ENCODE measurements at regions of chr3 and their contacts with region 1.

Region 1: DNA sequence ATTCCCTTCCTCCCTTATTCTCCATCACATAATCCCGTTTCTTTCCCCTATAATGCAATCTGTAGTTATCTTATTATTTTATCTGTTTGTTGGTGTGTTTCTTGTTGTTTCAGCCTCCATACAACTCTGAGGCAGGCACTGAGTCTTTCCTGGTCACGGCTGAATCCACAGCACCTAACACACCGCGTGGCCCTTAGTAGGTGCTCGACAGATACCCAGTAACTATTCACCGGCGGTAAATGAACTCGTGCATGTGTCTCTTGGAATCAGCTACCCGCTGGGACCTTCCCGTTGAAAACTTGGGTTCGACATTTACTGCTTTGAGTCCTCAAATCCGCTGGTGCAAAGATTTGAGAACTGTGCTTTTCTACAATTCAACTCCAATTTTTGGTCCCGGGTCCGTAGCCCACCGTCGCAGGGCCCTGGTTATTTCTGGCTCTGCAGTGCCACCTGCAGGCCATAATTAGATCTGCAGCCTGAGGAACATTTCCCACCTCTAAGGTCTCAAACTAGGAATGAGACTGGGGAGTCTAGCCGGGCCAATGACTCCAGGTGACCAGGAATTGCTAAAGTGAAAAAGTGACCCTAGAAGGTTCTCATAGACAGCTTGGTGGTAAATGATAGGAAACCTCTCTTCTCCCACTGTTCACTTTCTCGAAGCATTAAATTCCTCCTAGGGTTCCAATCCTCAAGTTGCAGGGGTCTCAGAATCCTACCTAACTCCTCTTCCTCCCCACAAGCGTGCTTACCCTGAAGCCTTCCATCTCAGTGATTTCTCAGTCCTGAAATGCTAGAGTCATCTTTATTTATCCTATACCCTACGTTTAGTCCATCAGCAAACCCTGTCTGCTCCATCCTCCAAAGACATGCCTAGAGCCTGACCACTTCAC is 40.0 kb upstream of the TRH start:
- DNase-seq: peak in 5 of 10 donors; percentile 28 to 64 (median 39)
- H3K4me3 ChIP-seq: peak overlapping the region in 47 of 59 donors; percentile 4 to 56 (median 35)
- H3K27ac ChIP-seq: peak overlapping the region in 1 of 59 donors; percentile 3
- H3K27me3 ChIP-seq: no peaks in the 10 kb centered on the region
- CTCF ChIP-seq: peak; percentile 83 to 98 (median 95)

Region 2: DNA sequence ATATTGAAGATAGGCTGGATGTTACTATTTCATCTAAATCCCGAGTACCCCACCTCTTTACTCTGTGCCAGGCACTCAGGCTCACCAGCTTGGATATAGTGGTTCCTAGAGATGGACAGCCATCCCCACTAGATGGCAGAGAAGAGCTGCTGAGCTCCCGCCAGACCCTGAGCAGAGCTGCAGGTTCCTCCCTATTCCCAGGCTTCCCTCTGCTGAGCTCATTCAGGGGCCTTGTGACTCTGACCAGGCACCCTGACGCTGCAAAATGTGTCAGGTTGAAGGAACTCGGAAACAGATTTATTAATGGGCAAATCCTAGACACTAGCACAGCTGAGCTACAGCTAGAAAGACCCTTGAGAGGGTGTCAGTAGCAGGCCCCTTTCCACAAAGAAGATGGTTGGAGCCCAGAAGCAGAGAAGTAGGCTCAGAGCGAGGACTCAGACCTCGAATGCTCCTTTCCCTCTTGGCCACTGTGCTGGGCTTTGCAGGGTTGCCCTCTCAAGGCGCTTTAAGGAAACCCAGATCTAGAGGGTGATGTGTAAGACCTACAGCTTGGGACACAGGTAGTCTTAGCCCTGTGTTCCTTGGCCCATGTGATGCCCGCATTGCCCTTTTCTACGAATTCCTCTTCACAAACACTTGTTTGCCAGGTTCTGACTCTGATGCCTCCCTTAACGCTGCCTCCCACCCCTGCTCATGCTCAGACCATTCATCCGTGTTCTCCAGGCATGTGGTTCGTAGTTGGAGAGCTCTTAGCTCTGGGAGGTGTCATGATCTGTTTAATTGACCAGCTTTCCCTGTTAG is 444.0 kb before region 1 on chr3:
- intact Hi-C with region 1: loop called (anchors 5 to 10 kb)
- DNase-seq: peak; percentile 66 to 94 (median 88)
- H3K4me3 ChIP-seq: peak overlapping the region in 23 of 59 donors; percentile 1 to 38 (median 22)
- H3K27ac ChIP-seq: peak overlapping the region; percentile 23 to 97 (median 89)
- H3K27me3 ChIP-seq: no peaks in the 10 kb centered on the region
- CTCF ChIP-seq: peak; percentile 77 to 99 (median 94)

Region 3: DNA sequence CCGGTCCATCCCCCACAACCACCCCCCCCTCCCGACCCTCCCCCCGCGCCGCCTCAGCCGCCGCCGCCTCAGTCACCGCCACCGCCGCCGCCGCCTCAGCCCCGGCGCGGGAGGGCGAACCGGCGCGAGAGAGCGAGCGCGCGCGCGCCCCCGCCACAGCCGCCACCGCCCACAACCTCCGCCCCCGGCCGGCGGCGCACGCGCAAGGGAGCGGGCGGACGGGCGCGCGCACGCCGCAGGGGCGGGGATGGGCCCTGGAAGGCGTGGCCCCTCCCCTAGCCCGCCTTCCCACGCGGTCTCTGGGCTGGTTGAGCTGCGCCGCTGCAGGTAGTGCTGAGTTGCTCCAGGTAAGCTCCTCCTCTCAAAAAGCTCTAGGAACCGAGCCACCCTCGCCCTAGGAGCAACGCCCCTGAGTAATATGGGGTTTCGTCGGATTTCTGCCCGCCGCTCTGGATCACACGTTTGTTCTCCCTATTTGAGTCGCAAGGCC is 40.9 kb before region 1 on chr3 and contains the start of gene TMCC1:
- intact Hi-C with region 1: loop called in 1 of 2 experiments (anchors 2 kb)
- DNase-seq: peak; percentile 61 to 90 (median 81)
- H3K4me3 ChIP-seq: peak within 1 kb of the TSS; percentile 65 to 99 (median 89)
- H3K27ac ChIP-seq: peak within 1 kb of the TSS; percentile 63 to 96 (median 92)
- H3K27me3 ChIP-seq: no peaks in the 10 kb centered on the region
- CTCF ChIP-seq: peak in 5 of 56 donors; percentile 2 to 25 (median 12)
- total RNA-seq, gene TMCC1: 64.8 to 161 (median 84.3) TPM